ENCODE measurements at regions of chr6 and their contacts with region 1.

Region 1: GRCh38 chr6:2988426-2989331 is 11.0 kb upstream of the NQO2 start:
- DNase-seq: peak; percentile 62
- H3K4me3 ChIP-seq: peak overlapping the region; percentile 71
- CTCF ChIP-seq: peak; percentile 84

Region 2: DNA sequence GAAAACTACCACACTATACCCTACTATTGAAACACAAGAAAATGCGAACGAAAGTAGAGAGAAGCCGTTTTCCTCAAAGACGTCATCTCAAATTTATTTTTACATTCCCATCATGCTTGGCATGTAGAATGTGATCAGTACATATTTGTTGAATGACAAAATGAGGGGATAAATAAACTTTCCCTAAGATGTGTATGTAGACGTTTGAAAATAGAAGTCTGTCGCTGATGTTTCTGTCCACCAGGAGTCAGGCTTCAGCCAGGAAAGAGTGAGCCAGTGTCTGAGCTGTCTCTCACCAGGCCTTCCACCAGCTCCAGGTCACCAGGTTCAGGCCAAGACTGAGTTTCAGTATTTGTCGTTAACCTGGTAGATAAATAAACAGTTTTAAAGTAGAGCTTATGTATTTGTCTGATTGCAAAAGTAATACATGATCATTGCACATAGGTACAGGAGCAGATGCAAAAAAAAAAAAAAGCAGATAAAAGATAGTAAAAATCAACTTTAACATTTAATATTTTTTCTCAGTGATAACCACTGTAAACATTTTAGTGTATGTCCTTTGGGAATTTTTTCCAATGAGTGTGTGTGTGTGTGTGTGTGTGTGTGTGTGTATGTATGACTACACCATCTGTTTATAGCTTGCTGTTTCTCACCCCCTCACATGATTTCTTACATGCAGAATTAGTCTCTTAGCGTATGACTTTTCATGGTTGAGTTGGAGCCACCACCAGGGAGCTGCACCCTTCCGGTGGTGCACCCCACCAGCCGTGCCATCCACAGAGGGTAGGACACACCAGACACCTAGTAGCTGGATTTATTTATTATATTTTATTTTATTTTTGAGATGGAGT is 197.3 kb before region 1 on chr6:
- CTCF ChIA-PET with region 1: interaction called, 29 read pairs
- POLR2A ChIA-PET with region 1: no interaction called
- DNase-seq: peak; percentile 61
- H3K4me3 ChIP-seq: no peak overlapping the region
- CTCF ChIP-seq: peak; percentile 68

Region 3: GRCh38 chr6:2848851-2849250 is 139.8 kb before region 1 on chr6:
- CTCF ChIA-PET with region 1: interaction called, 100 read pairs
- POLR2A ChIA-PET with region 1: interaction called, 14 read pairs
- DNase-seq: no peak
- H3K4me3 ChIP-seq: no peak overlapping the region
- CTCF ChIP-seq: no peak

Region 4: GRCh38 chr6:2959909-2960719 is 28.6 kb before region 1 on chr6:
- CTCF ChIA-PET with region 1: interaction called, 55 read pairs
- POLR2A ChIA-PET with region 1: interaction called, 4 read pairs
- DNase-seq: peak; percentile 45
- H3K4me3 ChIP-seq: no peak overlapping the region
- CTCF ChIP-seq: no peak

Region 5: DNA sequence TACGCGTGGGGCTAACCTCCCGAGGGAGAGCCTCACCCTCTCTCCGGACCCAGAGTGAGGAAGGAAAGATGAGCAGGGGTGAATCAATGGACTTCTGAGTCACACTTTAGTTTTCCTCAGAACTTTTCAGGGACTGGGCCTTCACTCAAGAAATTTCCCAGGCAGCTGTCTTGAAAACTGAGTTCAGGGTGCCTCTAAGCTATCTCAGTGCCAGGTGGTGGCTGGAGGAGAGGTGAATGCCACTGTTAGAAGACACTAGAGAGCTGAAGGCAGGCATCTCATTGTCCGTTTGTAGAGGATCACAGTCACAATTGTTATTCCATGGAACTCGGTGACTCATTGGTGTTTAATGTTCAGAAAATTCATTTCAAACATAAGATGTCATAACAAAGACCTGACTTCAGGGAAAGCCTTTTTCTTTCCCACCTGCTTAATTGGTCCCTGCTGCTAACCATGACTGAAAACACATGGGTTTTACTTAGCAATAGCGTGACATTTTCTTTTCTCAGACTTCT is 12.1 kb before region 1 on chr6:
- CTCF ChIA-PET with region 1: interaction called, 54 read pairs
- POLR2A ChIA-PET with region 1: interaction called, 14 read pairs
- DNase-seq: no peak
- H3K4me3 ChIP-seq: no peak overlapping the region
- CTCF ChIP-seq: no peak

Region 6: GRCh38 chr6:3052481-3053230 is 64.0 kb after region 1 on chr6:
- CTCF ChIA-PET with region 1: interaction called, 36 read pairs
- POLR2A ChIA-PET with region 1: interaction called, 4 read pairs
- DNase-seq: no peak
- H3K4me3 ChIP-seq: no peak overlapping the region
- CTCF ChIP-seq: no peak

Measured in AG04449 (cell line).